Sigmoid colon (tissue), 7 donors: ENCODE measurements at regions of chr5 and their contacts with region 1.

Region 1: GRCh38 chr5:143403593-143404415 is at the start of gene NR3C1:
- DNase-seq: peak; percentile 94
- H3K4me3 ChIP-seq: peak within 1 kb of the TSS; percentile 84 to 89 (median 88)
- H3K27ac ChIP-seq: peak within 1 kb of the TSS; percentile 99
- H3K4me1 ChIP-seq: peaks cover 0 to 39% (median 31%) of the 10 kb centered on the region in 4 donors
- H3K27me3 ChIP-seq: no peaks in the 10 kb centered on the region
- CTCF ChIP-seq: peak in 3 of 4 experiments; percentile 33 to 44 (median 38)
- EP300 ChIP-seq: no peak
- POLR2A ChIP-seq: no peak
- total RNA-seq, gene NR3C1: 36.0 to 65.6 (median 49.9) TPM

Region 2: GRCh38 chr5:142922223-142922952 is 481.4 kb before region 1 on chr5:
- intact Hi-C with region 1: loop called (anchors 2 kb)
- DNase-seq: no peak
- H3K4me3 ChIP-seq: no peak overlapping the region
- H3K27ac ChIP-seq: no peak overlapping the region
- H3K4me1 ChIP-seq: peaks cover 0 to 13% (median 5%) of the 10 kb centered on the region in 4 donors
- H3K27me3 ChIP-seq: no peaks in the 10 kb centered on the region
- CTCF ChIP-seq: peak; percentile 6 to 50 (median 44)
- EP300 ChIP-seq: no peak
- POLR2A ChIP-seq: no peak

Region 3: DNA sequence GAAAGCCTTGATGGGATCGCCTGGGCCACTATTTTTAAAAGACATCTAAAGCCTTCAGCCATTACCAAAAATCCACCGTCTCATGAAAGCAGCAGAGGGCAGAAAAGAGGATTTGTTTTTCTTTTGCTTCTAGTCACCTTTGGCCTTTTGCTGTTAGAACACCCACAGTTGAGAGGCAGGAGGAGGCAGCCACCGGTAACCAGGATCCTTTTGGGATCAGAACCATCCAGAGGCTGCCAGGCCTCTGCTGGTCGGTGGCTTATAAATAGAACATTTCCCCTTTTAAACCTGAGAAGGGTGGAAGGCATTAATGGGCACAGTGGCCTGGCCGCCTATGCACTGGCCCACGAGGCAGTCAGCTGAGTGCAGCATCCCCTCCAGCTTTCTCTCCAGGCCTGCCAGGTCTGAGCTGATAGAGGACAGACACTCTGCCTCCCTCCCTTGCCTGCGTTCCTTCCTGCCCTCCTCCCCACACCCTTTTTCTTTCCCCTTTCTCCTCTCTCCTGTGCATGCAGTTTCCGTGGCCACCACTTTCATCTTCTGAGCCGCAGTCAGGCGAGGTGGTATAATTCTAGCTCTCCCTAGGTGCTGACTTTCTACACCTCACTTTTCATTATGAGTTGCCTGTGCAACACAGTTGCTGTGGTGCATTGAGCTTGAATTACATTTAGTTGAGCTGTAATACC is 380.2 kb before region 1 on chr5:
- intact Hi-C with region 1: loop called (anchors 2 kb)
- DNase-seq: peak; percentile 92
- H3K4me3 ChIP-seq: no peak overlapping the region
- H3K27ac ChIP-seq: peak overlapping the region; percentile 38 to 64 (median 58)
- H3K4me1 ChIP-seq: peaks cover 0 to 28% (median 19%) of the 10 kb centered on the region in 4 donors
- H3K27me3 ChIP-seq: no peaks in the 10 kb centered on the region
- CTCF ChIP-seq: peak in 2 of 4 experiments; percentile 17 to 26
- EP300 ChIP-seq: peak; percentile 58 to 85 (median 76)
- POLR2A ChIP-seq: no peak

Region 4: DNA sequence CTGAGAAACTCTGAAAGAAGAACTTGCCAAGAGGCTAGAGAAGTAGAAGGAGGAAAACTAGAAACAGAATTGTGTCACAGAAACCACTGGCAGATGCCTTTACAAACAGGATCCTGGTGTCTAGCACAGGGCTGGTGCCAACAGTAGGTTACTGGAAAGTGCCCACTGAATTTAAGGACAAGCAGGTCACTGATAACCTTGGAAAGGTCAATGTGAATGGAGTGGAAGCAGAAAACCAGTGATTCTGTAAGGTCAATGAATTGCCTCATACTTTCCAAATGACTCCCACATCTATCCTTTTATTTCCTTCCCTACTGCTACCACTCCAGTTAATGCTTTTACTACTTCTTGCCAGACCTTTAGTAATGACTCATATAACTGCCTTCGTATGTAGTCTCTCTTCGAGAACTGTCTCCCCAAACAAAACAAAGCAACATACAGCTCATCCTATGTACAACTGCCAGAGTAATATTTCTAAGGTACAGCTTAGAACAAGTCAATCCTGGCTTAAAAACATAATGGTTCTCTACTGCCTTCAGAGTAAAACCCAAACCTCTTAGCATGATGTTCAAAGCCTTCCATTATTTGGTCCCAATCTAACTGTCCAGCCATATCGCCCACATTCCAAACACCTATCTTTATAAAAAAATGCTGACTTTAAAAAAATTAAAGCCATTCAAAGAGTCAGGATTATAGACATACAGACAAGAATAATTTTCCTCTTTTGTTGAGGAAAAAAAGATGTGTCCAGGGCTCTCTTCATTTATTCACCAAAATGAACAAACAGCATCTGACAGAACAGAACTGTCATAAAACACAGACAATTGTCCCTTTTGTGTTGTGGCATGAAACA is 52.8 kb before region 1 on chr5:
- intact Hi-C with region 1: no loop called
- DNase-seq: no peak
- H3K4me3 ChIP-seq: no peak overlapping the region
- H3K27ac ChIP-seq: peak overlapping the region in 2 of 4 donors; percentile 26 to 47
- H3K4me1 ChIP-seq: peaks cover 0 to 86% (median 60%) of the 10 kb centered on the region in 4 donors
- H3K27me3 ChIP-seq: no peaks in the 10 kb centered on the region
- CTCF ChIP-seq: no peak
- EP300 ChIP-seq: no peak
- POLR2A ChIP-seq: no peak

Region 5: GRCh38 chr5:143448518-143448917 is 44.7 kb after region 1 on chr5:
- intact Hi-C with region 1: no loop called
- DNase-seq: no peak
- H3K4me3 ChIP-seq: no peak overlapping the region
- H3K27ac ChIP-seq: no peak overlapping the region
- H3K4me1 ChIP-seq: no peaks in the 10 kb centered on the region
- H3K27me3 ChIP-seq: no peaks in the 10 kb centered on the region
- CTCF ChIP-seq: no peak
- EP300 ChIP-seq: no peak
- POLR2A ChIP-seq: no peak

Region 6: GRCh38 chr5:143495821-143496275 is 92.0 kb after region 1 on chr5:
- intact Hi-C with region 1: loop called (anchors 5 kb)
- DNase-seq: no peak
- H3K4me3 ChIP-seq: no peak overlapping the region
- H3K27ac ChIP-seq: peak overlapping the region in 3 of 4 donors; percentile 17 to 69 (median 34)
- H3K4me1 ChIP-seq: peaks cover 0 to 35% (median 29%) of the 10 kb centered on the region in 4 donors
- H3K27me3 ChIP-seq: no peaks in the 10 kb centered on the region
- CTCF ChIP-seq: no peak
- EP300 ChIP-seq: no peak
- POLR2A ChIP-seq: no peak

Region 7: GRCh38 chr5:143824851-143825720 is 421.3 kb after region 1 on chr5:
- intact Hi-C with region 1: loop called (anchors 5 kb)
- DNase-seq: peak; percentile 87
- H3K4me3 ChIP-seq: no peak overlapping the region
- H3K27ac ChIP-seq: no peak overlapping the region
- H3K4me1 ChIP-seq: peaks cover 0 to 7% (median 2%) of the 10 kb centered on the region in 4 donors
- H3K27me3 ChIP-seq: no peaks in the 10 kb centered on the region
- CTCF ChIP-seq: peak; percentile 56 to 96 (median 92)
- EP300 ChIP-seq: no peak
- POLR2A ChIP-seq: no peak